Naive thymus-derived CD4-positive, alpha-beta T cell (primary cell): ENCODE measurements at regions of chr19 and their contacts with region 1.

Region 1: DNA sequence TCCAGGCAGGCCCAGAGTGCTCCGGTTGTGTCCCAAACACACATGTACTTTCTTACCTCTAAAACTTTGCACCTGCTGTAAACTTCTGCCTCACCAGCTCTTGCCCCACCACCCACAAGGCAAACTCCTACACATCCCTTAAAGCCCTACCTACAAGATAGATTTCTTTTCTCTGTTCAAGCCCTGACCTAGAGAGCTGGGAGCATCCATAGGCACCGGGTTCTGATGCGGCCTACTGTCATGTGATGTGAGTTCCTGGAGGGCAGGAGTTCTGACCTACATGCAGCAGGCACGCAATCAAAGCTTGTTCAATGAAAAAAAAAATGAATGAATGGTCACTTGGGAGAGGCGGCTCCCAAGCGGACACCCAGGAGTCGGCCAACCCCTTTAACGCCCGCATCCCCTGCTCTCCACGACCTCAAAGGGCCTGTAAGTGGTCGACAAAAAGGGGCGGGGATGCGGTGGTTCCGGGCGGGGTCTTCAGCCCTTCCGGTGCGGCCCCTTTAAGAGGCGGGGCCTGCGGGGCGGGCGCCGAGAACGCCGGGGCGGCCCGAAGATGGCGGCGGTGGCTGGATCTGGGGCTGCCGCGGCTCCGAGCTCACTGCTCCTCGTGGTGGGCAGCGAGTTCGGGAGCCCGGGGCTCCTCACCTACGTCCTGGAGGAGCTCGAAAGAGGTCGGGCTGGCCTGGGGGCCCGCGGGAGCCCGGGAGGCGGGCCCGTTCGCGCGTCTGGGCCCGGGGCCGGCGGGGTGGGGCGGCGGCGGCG is at the start of gene MAP1S:
- DNase-seq: peak; percentile 26 to 82 (median 51)
- ATAC-seq: peak; percentile 85
- H3K4me3 ChIP-seq: peak within 1 kb of the TSS; percentile 71
- H3K4me3 Mint-ChIP-seq: peak within 1 kb of the TSS; percentile 85 to 93 (median 90)
- H3K27ac ChIP-seq: peak within 1 kb of the TSS; percentile 76
- H3K27ac Mint-ChIP-seq: peak within 1 kb of the TSS; percentile 75 to 96 (median 88)
- H3K4me1 ChIP-seq: peaks cover 19 to 24% of the 10 kb centered on the region in 2 donors
- H3K4me1 Mint-ChIP-seq: peaks cover 33 to 39% (median 36%) of the 10 kb centered on the region in 7 donors
- H3K27me3 ChIP-seq: no peaks in the 10 kb centered on the region
- H3K27me3 Mint-ChIP-seq: peaks cover 0 to 2% (median 0%) of the 10 kb centered on the region in 5 donors
- total RNA-seq, gene MAP1S: 28.6 to 73.8 (median 52.5) TPM

Region 2: DNA sequence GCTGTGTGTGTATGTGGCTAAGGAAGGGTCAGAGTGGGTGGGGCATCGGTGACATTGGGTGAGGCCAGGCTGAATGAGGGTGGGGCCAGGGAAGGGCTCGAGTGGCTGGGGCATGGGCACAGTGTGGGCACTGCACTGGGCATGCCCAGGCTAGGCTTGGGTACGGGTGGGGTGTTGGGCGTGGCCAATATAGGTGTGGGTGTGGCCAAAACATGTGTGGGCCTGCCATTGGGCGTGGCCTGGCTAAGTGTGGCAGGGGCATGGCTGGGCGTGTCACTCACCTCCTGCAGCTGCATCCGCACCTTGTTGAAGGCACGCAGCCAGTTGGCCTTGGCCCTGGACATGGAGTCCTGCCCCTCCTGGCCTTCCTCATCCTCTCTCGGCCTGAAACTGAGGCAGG is 64.1 kb before region 1 on chr19:
- CTCF ChIA-PET with region 1: no interaction called
- POLR2A ChIA-PET with region 1: no interaction called
- intact Hi-C with region 1: no loop called
- DNase-seq: no peak
- ATAC-seq: no peak
- H3K4me3 ChIP-seq: no peak overlapping the region
- H3K4me3 Mint-ChIP-seq: no peak overlapping the region
- H3K27ac ChIP-seq: no peak overlapping the region
- H3K27ac Mint-ChIP-seq: no peak overlapping the region
- H3K4me1 ChIP-seq: no peaks in the 10 kb centered on the region
- H3K4me1 Mint-ChIP-seq: peaks cover 0 to 5% (median 0%) of the 10 kb centered on the region in 7 donors
- H3K27me3 ChIP-seq: no peaks in the 10 kb centered on the region
- H3K27me3 Mint-ChIP-seq: peaks cover 4 to 18% (median 12%) of the 10 kb centered on the region in 5 donors

Region 3: DNA sequence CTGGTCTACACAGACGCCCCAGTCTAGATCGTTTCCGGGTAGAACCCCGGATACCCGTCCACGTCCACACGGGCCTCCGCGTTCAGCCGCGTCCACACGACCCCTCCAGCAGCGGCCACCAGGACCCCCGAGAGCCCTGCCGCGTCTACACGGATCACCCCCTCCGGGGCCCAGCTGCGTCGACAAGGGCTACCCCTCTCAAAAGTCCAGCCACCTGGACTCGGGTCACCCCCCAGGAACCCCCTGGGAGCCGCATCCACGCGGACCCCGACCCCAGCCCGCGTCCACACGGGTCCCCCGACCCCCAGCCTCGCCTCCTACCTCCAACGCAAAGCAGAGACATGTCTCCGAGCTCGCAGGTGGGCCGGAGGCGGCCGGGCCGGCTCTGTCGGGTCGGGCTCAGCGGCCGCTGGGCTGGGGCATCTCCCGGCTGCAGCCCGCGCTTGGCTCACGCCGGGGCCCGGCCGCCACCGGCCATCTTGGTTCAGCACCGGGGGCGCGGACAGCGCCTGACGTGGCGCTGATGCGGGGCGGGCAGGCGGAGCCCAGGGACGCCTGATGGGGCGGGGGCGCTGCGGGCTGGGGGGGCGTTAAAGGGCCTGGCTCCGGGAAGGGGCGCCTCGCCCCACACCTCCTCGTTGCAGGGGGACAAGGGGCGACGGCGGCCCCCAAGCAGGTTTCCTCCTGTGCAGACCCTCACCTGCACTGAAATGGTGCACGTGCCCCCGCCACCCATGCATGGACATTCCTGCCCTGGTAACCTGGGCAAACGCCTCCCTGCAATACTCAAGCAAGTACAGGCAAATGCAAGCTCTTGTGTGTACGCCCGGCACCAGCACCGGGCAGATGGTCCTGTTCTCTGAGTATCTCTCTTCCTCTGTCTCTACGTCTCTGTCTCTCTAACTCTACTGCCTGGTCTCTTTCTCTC is 31.0 kb before region 1 on chr19 and contains the start of gene UNC13A:
- CTCF ChIA-PET with region 1: no interaction called
- POLR2A ChIA-PET with region 1: no interaction called
- intact Hi-C with region 1: loop called in 1 of 2 experiments (anchors 1 kb)
- DNase-seq: peak; percentile 16 to 74 (median 48)
- ATAC-seq: peak; percentile 91
- H3K4me3 ChIP-seq: no peak within 1 kb of the TSS
- H3K4me3 Mint-ChIP-seq: peak within 1 kb of the TSS; percentile 26 to 77 (median 66)
- H3K27ac ChIP-seq: no peak within 1 kb of the TSS
- H3K27ac Mint-ChIP-seq: peak within 1 kb of the TSS in 3 of 9 donors; percentile 3 to 14 (median 12)
- H3K4me1 ChIP-seq: peaks cover 0 to 3% of the 10 kb centered on the region in 2 donors
- H3K4me1 Mint-ChIP-seq: peaks cover 5 to 15% (median 12%) of the 10 kb centered on the region in 7 donors
- H3K27me3 ChIP-seq: peaks cover 0 to 18% of the 10 kb centered on the region in 2 donors
- H3K27me3 Mint-ChIP-seq: peaks cover 62 to 72% (median 65%) of the 10 kb centered on the region in 5 donors
- total RNA-seq, gene UNC13A: 0.03 to 0.30 (median 0.11) TPM in 4 of 5 experiments, not detected in the other

Region 4: DNA sequence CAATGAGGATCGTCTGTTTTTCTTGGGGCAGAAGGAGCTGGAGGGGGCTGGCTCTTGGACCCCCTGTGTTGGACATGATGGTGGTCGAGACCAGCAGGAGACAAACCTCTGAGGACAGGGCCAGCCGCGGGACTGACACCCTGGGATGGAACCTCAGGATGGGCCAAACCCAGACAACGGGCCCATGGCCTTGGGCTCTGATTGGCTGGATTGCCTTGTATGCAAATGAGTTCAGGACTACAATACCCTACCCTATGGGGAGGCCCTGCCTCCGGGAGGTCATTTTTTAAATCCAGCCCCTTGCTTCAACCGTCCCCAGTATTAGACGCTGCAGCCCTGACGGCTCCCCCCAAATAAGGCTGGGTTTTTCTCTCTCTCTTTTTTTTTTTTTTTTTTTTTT is 174.6 kb after region 1 on chr19:
- CTCF ChIA-PET with region 1: no interaction called
- POLR2A ChIA-PET with region 1: no interaction called
- intact Hi-C with region 1: no loop called
- DNase-seq: no peak
- ATAC-seq: no peak
- H3K4me3 ChIP-seq: no peak overlapping the region
- H3K4me3 Mint-ChIP-seq: no peak overlapping the region
- H3K27ac ChIP-seq: no peak overlapping the region
- H3K27ac Mint-ChIP-seq: no peak overlapping the region
- H3K4me1 ChIP-seq: no peaks in the 10 kb centered on the region
- H3K4me1 Mint-ChIP-seq: peaks cover 0 to 2% (median 0%) of the 10 kb centered on the region in 7 donors
- H3K27me3 ChIP-seq: no peaks in the 10 kb centered on the region
- H3K27me3 Mint-ChIP-seq: no peaks in the 10 kb centered on the region